OCI-LY7 (cell line): ENCODE measurements at regions of chr10 and their contacts with region 1.

Region 1: GRCh38 chr10:111756217-111757061 is 427.1 kb downstream of the GPAM start:
- DNase-seq: peak; percentile 50
- H3K4me3 ChIP-seq: no peak overlapping the region
- H3K27ac ChIP-seq: no peak overlapping the region
- H3K4me1 ChIP-seq: no peaks in the 10 kb centered on the region
- CTCF ChIP-seq: peak; percentile 73

Region 2: DNA sequence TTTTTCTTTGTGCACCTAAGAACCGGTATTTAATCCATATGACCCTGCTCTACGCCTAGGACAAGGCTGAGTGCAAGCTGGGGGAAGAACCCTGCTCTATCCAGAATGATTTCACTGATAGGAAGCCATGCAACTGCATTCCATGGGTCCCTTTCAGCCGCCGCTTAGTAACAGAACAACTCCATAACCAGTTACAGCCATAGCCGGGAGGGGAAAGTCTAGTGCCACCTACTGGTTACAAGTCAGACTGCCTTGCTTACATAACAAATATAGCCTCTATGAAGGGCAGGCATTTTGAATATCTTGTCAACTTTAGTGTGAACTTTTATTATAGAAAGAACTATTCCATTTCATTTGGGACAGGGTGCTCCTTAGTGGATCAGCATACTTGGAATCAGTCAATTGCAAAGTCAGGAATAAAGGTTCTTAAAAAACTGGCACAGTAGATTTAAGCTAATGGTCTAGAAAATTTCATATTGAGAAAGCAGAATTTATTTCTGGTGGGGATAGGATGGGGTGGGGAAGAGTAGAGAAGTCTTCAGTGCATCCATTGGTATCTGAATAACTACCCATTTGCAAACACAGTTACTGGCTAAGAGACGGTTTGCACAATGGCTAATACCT is 157.9 kb before region 1 on chr10:
- CTCF ChIA-PET with region 1: no interaction called
- POLR2A ChIA-PET with region 1: no interaction called
- intact Hi-C with region 1: no loop called
- DNase-seq: peak; percentile 55
- H3K4me3 ChIP-seq: no peak overlapping the region
- H3K27ac ChIP-seq: no peak overlapping the region
- H3K4me1 ChIP-seq: no peaks in the 10 kb centered on the region
- CTCF ChIP-seq: peak; percentile 89

Region 3: DNA sequence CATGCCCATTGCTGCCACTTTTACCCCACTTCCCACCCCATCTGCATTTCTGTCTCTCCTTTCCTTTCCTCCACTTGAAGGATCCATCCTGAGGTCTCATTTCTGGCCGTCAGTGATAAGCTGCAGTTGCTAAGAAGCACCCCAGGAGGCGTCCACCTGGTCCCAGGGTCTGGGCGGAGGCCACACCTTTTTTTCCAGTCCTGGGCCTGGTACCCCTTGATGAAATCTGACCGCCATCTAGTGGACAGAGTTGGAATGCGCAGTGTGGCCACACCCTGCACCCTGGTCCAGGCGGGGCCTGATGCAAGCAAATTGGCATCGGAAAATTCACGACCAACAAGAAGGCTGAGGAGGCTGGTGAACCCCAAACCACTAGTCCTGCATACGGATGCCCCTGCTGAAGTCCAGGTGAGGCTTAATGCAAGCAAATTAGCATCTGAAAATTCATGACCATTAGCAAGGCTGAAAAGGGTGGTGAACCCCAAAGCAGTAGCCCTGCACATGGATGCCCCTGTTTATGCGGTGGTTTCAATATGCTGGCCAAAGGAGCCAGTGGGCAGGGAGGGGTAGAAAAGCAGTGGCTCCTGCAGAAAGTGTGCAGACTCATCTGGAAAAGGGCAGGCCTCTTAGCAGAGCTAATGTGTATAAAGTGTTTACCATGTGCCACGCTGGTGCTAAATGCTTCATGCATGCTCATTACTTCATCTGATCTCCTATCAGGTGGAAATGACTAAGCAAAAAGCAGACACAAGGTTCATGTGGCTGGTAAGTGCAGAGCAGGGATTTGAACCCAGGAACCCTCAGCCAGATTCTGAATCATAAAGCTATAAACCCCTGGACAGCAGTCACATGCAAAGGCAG is 383.9 kb after region 1 on chr10:
- CTCF ChIA-PET with region 1: interaction called, 4 read pairs
- POLR2A ChIA-PET with region 1: no interaction called
- intact Hi-C with region 1: loop called (anchors 2 kb)
- DNase-seq: peak; percentile 80
- H3K4me3 ChIP-seq: no peak overlapping the region
- H3K27ac ChIP-seq: no peak overlapping the region
- H3K4me1 ChIP-seq: no peaks in the 10 kb centered on the region
- CTCF ChIP-seq: peak; percentile 88